Heart right ventricle (tissue), 16 donors: ENCODE measurements at regions of chr4 and their contacts with region 1.

Region 1: DNA sequence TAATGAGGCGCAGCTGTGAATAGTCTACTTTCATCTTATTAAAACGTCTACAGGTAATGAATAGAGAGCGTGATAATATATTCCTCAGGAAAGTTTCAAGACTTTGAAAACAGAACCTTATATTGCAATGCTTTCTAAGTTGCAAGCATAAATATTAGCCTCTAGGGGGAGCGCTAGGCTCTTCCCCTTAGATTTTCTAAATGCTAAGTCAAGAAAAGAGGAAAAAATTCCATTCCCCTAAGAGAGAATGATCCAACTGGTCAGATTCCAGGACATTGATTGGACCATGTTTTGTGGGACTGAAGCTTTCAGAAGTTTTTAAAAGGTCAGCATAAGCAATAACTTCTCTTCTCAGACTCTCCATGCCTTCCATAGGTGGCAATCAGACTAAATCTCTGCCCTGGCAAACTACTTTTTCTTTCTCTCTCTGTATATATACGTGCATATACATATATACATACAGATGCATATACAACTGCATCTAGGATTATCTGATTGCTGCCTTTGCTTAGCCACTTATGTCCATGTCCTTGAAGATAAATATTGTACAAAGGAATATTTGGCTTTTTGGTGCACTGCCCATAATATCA is 492.9 kb downstream of the INPP4B start:
- DNase-seq: peak in 1 of 2 donors; percentile 26
- ATAC-seq: peak in 7 of 8 donors; percentile 36 to 69 (median 48)
- H3K4me3 ChIP-seq: no peak overlapping the region
- H3K27ac ChIP-seq: peak overlapping the region in 6 of 10 donors; percentile 21 to 68 (median 34)
- H3K4me1 ChIP-seq: peaks cover 2 to 80% (median 67%) of the 10 kb centered on the region in 9 donors
- H3K27me3 ChIP-seq: no peaks in the 10 kb centered on the region
- CTCF ChIP-seq: peak; percentile 84 to 96 (median 90)

Region 2: DNA sequence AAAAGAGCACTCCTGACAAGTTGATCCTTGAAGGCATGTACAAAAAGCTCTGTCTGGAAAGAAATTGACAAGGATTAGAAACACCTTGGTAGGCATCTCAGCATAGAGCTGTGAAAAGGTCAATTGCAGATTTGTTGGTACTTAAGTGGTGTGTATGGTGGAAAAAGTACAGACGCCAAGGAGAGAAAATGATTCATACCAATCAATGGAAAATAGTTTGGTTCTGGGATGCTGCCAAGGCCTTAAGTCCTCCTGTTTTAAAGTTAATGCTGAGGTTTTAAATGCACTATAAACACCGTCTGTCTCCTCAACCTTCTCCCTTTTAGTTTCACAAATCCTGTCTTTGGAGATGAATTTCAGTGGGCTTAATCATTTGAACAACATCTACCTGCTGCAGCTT is 192.7 kb before region 1 on chr4:
- intact Hi-C with region 1: no loop called
- DNase-seq: no peak
- ATAC-seq: no peak
- H3K4me3 ChIP-seq: no peak overlapping the region
- H3K27ac ChIP-seq: no peak overlapping the region
- H3K4me1 ChIP-seq: peaks cover 0 to 12% (median 7%) of the 10 kb centered on the region in 9 donors
- H3K27me3 ChIP-seq: no peaks in the 10 kb centered on the region
- CTCF ChIP-seq: no peak

Region 3: DNA sequence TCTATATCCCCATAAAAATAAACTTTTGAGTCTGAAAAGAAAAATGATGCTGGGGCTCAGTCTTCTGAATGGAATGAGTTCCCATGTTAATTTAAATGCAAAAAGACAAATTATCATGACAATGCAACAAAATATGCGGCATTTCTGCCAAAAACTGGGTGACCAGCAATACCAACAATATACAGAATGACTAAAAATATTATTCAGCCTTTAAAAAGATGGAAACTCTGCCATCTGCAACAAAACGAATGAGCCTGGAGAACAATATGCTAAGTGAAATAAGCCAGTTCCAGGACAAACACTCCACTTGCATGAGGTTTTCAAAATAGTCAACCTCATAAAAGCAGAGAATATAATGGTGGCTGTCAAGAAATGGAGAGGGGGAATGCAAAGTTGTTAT is 158.3 kb before region 1 on chr4:
- intact Hi-C with region 1: no loop called
- DNase-seq: no peak
- ATAC-seq: no peak
- H3K4me3 ChIP-seq: no peak overlapping the region
- H3K27ac ChIP-seq: no peak overlapping the region
- H3K4me1 ChIP-seq: no peaks in the 10 kb centered on the region
- H3K27me3 ChIP-seq: no peaks in the 10 kb centered on the region
- CTCF ChIP-seq: no peak

Region 4: GRCh38 chr4:142314686-142315085 is 38.6 kb before region 1 on chr4:
- intact Hi-C with region 1: no loop called
- DNase-seq: no peak
- ATAC-seq: no peak
- H3K4me3 ChIP-seq: no peak overlapping the region
- H3K27ac ChIP-seq: no peak overlapping the region
- H3K4me1 ChIP-seq: peaks cover 0 to 37% (median 10%) of the 10 kb centered on the region in 9 donors
- H3K27me3 ChIP-seq: no peaks in the 10 kb centered on the region
- CTCF ChIP-seq: no peak

Region 5: GRCh38 chr4:142405021-142405694 is 51.9 kb after region 1 on chr4:
- intact Hi-C with region 1: loop called in 3 of 10 experiments (anchors 2 to 5 kb)
- DNase-seq: peak; percentile 12 to 67
- ATAC-seq: peak; percentile 62 to 83 (median 76)
- H3K4me3 ChIP-seq: peak overlapping the region; percentile 13 to 65 (median 52)
- H3K27ac ChIP-seq: peak overlapping the region in 9 of 10 donors; percentile 51 to 85 (median 71)
- H3K4me1 ChIP-seq: peaks cover 0 to 57% (median 48%) of the 10 kb centered on the region in 9 donors
- H3K27me3 ChIP-seq: no peaks in the 10 kb centered on the region
- CTCF ChIP-seq: no peak

Region 6: DNA sequence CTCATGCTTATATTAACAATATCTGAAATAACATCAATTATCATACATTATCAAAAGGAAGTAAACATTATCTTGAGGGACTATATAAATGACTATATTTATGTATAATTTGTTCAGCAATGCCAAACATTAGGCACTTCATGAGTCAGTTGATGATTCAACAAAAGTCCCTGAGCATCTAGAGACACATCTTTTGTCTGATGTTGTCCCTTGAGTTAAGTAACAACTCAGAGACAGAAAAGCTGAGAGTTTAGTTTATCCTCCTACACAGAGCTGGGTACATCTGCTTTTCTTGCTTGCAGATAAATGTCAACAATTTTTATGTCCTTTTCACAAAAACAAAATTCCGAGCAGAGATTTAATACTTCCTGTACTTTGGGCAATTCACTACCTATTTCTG is 181.8 kb after region 1 on chr4:
- intact Hi-C with region 1: loop called in 1 of 10 experiments (anchors 10 kb)
- DNase-seq: no peak
- ATAC-seq: no peak
- H3K4me3 ChIP-seq: no peak overlapping the region
- H3K27ac ChIP-seq: no peak overlapping the region
- H3K4me1 ChIP-seq: peaks cover 0 to 4% (median 0%) of the 10 kb centered on the region in 9 donors
- H3K27me3 ChIP-seq: no peaks in the 10 kb centered on the region
- CTCF ChIP-seq: no peak

Region 7: GRCh38 chr4:142719854-142720541 is 366.8 kb after region 1 on chr4:
- intact Hi-C with region 1: loop called in 7 of 10 experiments (anchors 5 to 10 kb)
- DNase-seq: no peak
- ATAC-seq: no peak
- H3K4me3 ChIP-seq: no peak overlapping the region
- H3K27ac ChIP-seq: no peak overlapping the region
- H3K4me1 ChIP-seq: peaks cover 0 to 8% (median 0%) of the 10 kb centered on the region in 9 donors
- H3K27me3 ChIP-seq: no peaks in the 10 kb centered on the region
- CTCF ChIP-seq: peak; percentile 25 to 66 (median 55)

Region 8: GRCh38 chr4:142840516-142841123 is 487.4 kb after region 1 on chr4:
- intact Hi-C with region 1: loop called in 5 of 10 experiments (anchors 5 to 10 kb)
- DNase-seq: no peak
- ATAC-seq: no peak
- H3K4me3 ChIP-seq: no peak overlapping the region
- H3K27ac ChIP-seq: no peak overlapping the region
- H3K4me1 ChIP-seq: peaks cover 0 to 24% (median 0%) of the 10 kb centered on the region in 9 donors
- H3K27me3 ChIP-seq: peaks cover 0 to 21% (median 1%) of the 10 kb centered on the region in 7 donors
- CTCF ChIP-seq: peak; percentile 13 to 80 (median 69)